AG04450 (cell line): ENCODE measurements at regions of chr11 and their contacts with region 1.

Region 1: GRCh38 chr11:128884703-128885338 is 6.3 kb upstream of the KCNJ5 start:
- DNase-seq: peak; percentile 33
- H3K4me3 ChIP-seq: no peak overlapping the region
- H3K27ac ChIP-seq: no peak overlapping the region
- H3K27me3 ChIP-seq: peaks cover 59% of the 10 kb centered on the region
- CTCF ChIP-seq: peak; percentile 84

Region 2: DNA sequence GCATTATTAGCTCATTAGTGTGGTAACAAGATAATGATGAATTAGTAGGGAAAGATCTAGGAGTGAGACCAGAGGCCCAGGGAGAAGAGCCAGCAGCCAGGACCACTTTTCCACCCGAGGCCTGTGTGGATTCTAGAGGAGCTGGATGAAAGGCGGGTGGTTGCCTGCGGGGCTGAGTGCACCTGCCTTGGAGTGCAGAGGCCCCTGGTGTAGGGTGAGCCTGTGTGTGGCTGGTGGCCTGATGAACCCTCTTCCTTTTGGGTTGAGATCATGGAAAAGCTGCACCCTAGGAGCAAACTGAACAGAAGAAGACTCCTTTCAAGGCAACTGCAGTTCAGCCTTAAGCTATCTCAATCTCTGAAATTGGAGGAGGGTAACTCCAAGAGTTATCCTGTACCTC is 63.8 kb after region 1 on chr11:
- CTCF ChIA-PET with region 1: interaction called, 59 read pairs
- POLR2A ChIA-PET with region 1: no interaction called
- DNase-seq: no peak
- H3K4me3 ChIP-seq: no peak overlapping the region
- H3K27ac ChIP-seq: no peak overlapping the region
- H3K27me3 ChIP-seq: peaks cover 2% of the 10 kb centered on the region
- CTCF ChIP-seq: peak; percentile 30; the same call in 1 of the 2 replicates